HEK293 (cell line): ENCODE measurements at regions of chr6 and their contacts with region 1.

Region 1: GRCh38 chr6:32402812-32403211 is 4.2 kb downstream of the BTNL2 start:
- H3K4me3 ChIP-seq: no peak overlapping the region
- H3K27ac ChIP-seq: no peak overlapping the region
- H3K4me1 ChIP-seq: no peaks in the 10 kb centered on the region
- CTCF ChIP-seq: no peak

Region 2: DNA sequence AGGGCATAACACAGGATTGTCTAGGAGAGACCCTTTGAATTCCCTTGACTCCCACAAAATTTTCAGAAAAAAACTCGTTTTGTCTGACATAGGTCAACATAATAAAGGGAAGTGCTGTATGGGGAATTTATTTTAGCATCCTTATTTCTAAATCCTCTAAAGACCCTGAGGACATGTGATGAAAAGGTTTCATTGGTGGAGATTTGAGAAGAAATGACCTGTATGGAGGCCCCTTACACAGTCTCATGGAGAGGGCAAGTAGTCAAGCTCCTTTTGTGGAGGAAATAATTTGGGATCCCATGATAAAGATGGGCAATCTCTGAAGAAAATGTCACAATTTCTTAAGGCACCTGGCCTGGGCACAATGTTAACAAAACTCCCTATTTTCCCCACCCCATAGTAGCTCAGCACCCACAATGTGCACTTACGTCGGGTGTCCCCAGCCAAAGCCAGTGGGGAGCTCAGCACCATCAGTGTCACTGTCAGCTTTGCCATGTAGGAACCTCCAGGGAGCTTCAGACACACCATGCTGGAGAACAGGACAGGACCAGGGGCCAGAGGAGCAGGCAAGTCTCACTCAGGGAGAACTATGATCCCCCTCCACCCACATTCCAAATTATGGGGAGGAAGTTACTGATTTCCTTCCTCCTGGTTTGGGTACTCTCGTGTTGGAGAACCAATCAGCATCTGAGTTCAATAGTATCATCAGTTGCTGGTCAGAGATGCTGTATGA is 127.1 kb after region 1 on chr6 and contains the start of gene HLA-DRB5:
- CTCF ChIA-PET with region 1: no interaction called
- POLR2A ChIA-PET with region 1: no interaction called
- H3K4me3 ChIP-seq: no peak within 1 kb of the TSS
- H3K27ac ChIP-seq: no peak within 1 kb of the TSS
- H3K4me1 ChIP-seq: no peaks in the 10 kb centered on the region
- CTCF ChIP-seq: no peak

Region 3: DNA sequence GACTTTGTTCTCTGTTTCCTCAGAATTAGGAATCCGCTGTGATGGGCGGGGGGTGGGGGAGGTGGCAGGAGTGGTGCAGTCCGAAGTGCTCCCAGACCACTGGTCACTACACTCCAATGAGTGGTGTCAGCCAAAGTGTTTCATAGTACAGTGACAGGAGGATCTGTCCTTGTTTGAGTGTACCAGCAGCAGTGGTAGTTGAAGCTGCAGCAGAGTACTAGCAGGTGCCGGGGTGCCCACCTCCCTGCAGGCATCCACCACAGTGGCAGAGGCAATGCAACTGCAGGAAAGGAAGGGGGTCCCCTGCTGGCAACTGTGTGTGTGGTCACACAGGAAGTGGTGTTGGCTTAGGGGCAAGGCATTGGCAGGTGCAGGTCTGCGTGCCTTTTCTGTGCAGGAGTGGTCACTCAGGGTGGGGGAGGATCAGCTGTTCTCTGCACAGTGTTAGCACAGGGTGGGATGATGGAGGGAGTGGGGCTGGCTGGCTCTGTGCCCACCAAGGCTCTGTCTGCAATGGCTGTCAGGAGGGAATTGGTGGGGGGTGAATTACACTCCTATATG is 404.3 kb after region 1 on chr6:
- CTCF ChIA-PET with region 1: interaction called, 11 read pairs
- POLR2A ChIA-PET with region 1: no interaction called
- H3K4me3 ChIP-seq: no peak overlapping the region
- H3K27ac ChIP-seq: no peak overlapping the region
- H3K4me1 ChIP-seq: no peaks in the 10 kb centered on the region
- CTCF ChIP-seq: no peak